HCT116 (cell line): ENCODE measurements at regions of chr18 and their contacts with region 1.

Region 1: DNA sequence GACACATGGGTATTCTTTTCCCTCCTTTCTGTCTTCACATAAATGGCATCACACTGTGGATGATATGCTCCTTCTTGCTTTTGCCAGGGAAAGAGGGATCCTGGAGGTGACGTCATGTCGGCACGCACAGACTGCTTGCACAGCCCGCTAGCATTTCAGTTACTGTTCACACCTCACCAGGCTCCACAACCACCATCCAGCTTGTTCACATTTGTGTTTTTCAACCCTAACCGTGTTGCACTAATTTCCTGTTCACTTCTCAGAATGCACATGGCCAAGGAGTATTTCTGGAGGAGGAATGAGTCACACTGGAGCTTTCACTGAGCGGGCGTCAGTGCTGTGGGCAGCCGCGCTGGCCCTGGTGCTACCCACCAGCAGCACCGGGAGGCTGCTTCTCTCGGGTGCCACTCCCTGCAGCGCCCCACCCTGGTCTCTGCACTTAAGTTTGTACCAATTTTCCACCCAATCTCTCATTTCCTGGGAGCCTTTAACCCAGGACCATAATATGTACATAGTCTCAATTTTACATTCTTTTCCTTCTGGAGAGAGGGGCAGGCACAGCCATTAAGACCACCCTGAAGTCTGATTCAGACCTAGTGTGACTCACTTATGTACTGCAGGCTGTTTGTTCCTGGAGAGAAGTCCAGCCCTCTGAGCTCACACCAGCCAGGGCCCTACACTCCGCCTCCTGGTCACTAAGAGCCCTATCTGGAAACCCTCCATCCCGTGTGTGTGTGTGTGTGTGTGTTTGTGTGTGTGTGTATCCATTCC is 65.1 kb downstream of the MBP start:
- DNase-seq: peak; percentile 75
- ATAC-seq: peak; percentile 84
- H3K4me3 ChIP-seq: peak overlapping the region in 1 of 2 experiments; percentile 37; a peak in 3 of 4 replicates
- H3K27ac ChIP-seq: peak overlapping the region; percentile 67
- H3K4me1 ChIP-seq: peaks cover 52 to 81% of the 10 kb centered on the region in 2 experiments
- H3K27me3 ChIP-seq: no peaks in the 10 kb centered on the region
- CTCF ChIP-seq: peak in 2 of 3 experiments; percentile 15 to 34; a peak in 2 of 6 replicates
- POLR2A ChIP-seq: no peak
- RAD21 ChIP-seq: no peak

Region 2: DNA sequence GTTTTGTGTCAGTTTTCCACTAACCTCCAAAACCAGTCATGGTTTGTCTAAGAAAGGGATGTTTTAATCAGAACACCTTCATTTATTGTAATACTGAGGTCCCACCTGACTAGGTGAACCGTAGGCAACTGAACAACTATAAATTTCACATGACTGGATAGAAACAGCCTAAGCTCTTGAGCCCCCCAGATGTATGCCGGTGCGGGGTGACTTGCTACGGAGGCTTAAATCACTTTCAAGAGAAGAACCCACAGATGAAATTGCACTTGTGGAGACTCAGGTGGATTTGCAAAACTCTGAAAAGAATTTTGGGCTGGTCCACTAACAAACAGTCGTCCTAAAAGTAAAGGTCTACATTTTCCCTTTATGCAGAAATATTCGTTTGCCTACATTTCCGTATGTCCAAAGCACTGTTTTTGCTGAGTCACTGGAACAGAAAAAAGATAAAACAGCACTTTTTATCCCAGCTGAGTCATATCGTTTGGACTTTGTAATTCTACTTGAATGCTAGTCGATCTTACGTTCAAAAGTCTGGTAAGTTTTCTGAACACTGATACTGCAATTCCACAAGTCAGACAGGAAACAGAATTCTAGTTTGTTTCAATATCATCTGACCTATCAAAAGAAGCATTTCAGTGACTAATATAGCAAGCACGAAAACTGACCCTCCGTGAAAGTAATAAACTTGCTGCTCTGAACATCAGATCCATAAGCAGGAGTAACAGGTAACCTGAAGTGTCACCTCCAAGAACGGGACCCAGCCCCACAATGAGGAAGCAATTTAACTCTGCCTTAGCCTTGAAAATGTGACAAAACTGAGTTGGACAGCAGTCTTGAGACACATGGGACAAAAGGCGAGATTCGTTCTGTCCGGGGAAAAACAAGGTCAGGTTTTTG is 590.6 kb before region 1 on chr18:
- CTCF ChIA-PET with region 1: no interaction called
- POLR2A ChIA-PET with region 1: no interaction called
- RAD21 ChIA-PET with region 1: no interaction called
- intact Hi-C with region 1: no loop called
- DNase-seq: no peak
- ATAC-seq: peak; percentile 80
- H3K4me3 ChIP-seq: peak overlapping the region; percentile 37 to 57
- H3K27ac ChIP-seq: peak overlapping the region; percentile 72; the same call in 1 of the 2 replicates
- H3K4me1 ChIP-seq: peaks cover 12 to 24% of the 10 kb centered on the region in 2 experiments; a peak in 3 of 4 replicates
- H3K27me3 ChIP-seq: no peaks in the 10 kb centered on the region
- CTCF ChIP-seq: no peak
- POLR2A ChIP-seq: no peak
- RAD21 ChIP-seq: 0 out of 2 replicates have a peak, but pooled peaks have one; percentile 5

Region 3: DNA sequence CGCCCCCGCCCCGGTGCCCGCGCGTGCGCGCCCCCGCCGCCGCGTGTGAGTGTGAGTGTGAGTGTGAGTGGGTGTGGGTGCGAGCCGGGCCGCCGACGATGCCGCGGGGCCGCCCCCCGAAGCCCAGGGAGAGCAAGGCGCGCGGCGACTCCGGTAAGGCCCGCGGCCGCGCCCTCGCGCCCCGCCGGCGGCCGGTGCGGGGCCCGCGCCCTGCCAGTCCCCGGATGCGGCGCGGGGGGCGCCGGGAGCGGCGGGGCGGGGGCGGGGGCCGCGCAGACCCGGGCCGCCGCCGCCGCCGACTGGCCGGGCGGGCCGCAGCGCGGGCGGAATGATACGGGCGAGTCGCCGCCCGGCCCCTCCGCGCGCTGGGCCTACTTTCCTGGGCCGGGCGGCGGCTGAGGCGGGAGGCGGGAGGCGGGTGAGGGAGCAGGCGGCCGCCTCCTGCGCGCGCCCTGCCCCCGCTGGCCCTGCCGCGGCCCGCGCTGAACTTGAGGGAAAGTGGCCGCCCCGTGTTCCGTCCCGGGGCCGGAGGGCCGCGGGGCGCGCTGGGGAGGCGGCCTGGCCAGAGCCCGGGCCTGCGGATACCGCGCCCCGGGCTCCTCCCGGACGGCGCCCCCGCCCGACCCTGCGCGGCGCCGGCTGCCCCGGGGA is 244.8 kb before region 1 on chr18 and contains the start of gene ZNF236:
- CTCF ChIA-PET with region 1: no interaction called
- POLR2A ChIA-PET with region 1: no interaction called
- RAD21 ChIA-PET with region 1: no interaction called
- intact Hi-C with region 1: loop called (anchors 5 kb)
- DNase-seq: no peak
- ATAC-seq: peak; percentile 51
- H3K4me3 ChIP-seq: peak within 1 kb of the TSS; percentile 83 to 92
- H3K27ac ChIP-seq: peak within 1 kb of the TSS; percentile 97
- H3K4me1 ChIP-seq: peaks cover 11 to 40% of the 10 kb centered on the region in 2 experiments
- H3K27me3 ChIP-seq: no peaks in the 10 kb centered on the region
- CTCF ChIP-seq: no peak
- POLR2A ChIP-seq: peak; percentile 45
- RAD21 ChIP-seq: no peak
- total RNA-seq, gene ZNF236: 15.0 TPM

Region 4: GRCh38 chr18:76850112-76850511 is 217.4 kb before region 1 on chr18:
- CTCF ChIA-PET with region 1: no interaction called
- POLR2A ChIA-PET with region 1: no interaction called
- RAD21 ChIA-PET with region 1: no interaction called
- intact Hi-C with region 1: no loop called
- DNase-seq: no peak
- ATAC-seq: no peak
- H3K4me3 ChIP-seq: no peak overlapping the region
- H3K27ac ChIP-seq: no peak overlapping the region
- H3K4me1 ChIP-seq: no peaks in the 10 kb centered on the region
- H3K27me3 ChIP-seq: no peaks in the 10 kb centered on the region
- CTCF ChIP-seq: no peak
- POLR2A ChIP-seq: no peak
- RAD21 ChIP-seq: no peak

Region 5: GRCh38 chr18:76943542-76944339 is 123.7 kb before region 1 on chr18:
- CTCF ChIA-PET with region 1: no interaction called
- POLR2A ChIA-PET with region 1: no interaction called
- RAD21 ChIA-PET with region 1: no interaction called
- intact Hi-C with region 1: no loop called
- DNase-seq: no peak
- ATAC-seq: no peak
- H3K4me3 ChIP-seq: no peak overlapping the region
- H3K27ac ChIP-seq: no peak overlapping the region
- H3K4me1 ChIP-seq: no peaks in the 10 kb centered on the region
- H3K27me3 ChIP-seq: no peaks in the 10 kb centered on the region
- CTCF ChIP-seq: no peak
- POLR2A ChIP-seq: no peak
- RAD21 ChIP-seq: no peak

Region 6: GRCh38 chr18:77101410-77102258 is 34.2 kb after region 1 on chr18:
- CTCF ChIA-PET with region 1: no interaction called
- POLR2A ChIA-PET with region 1: interaction called, 3 read pairs
- RAD21 ChIA-PET with region 1: no interaction called
- intact Hi-C with region 1: loop called (anchors 1 kb)
- DNase-seq: peak; percentile 89
- ATAC-seq: peak; percentile 87
- H3K4me3 ChIP-seq: peak overlapping the region; percentile 23 to 56
- H3K27ac ChIP-seq: peak overlapping the region; percentile 96
- H3K4me1 ChIP-seq: peaks cover 40 to 73% of the 10 kb centered on the region in 2 experiments
- H3K27me3 ChIP-seq: no peaks in the 10 kb centered on the region
- CTCF ChIP-seq: no peak
- POLR2A ChIP-seq: no peak
- RAD21 ChIP-seq: no peak

Region 7: DNA sequence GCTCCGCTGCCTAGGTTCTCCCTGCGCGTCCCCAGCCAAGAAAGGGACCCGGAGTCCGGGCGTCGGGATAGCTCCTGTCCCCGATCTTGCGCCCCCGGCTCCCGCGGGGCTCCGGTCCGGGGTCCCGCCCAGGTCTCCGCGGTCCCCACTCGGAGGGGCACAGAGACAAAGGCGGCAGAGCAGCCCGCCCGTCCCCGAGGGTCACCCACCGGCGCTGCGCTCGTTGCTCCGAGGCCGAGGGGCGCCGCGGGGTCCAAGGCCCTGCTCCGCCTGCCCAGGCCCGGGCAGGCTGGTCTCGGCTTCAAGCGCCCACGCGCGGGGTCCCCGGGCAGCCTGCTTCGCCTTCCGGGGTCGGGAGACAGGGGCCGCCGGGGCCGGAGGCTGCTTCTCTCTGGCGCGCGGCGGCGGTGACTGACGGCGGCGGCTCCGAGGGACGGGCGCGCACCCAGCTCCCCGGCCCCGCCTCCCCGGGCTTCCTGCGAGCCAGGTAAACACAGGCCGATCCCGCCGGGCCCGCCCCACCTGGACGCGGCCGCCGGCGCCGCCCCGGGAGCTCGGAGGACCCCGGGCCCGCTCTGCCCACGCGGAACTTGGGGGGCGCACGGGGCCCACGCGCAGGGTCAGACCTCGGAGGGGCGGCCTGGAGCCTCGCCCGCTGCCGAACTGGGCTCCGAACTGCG is 65.0 kb after region 1 on chr18 and contains the start of gene MBP:
- CTCF ChIA-PET with region 1: no interaction called
- POLR2A ChIA-PET with region 1: no interaction called
- RAD21 ChIA-PET with region 1: no interaction called
- intact Hi-C with region 1: loop called (anchors 2 kb)
- DNase-seq: no peak
- ATAC-seq: peak; percentile 83
- H3K4me3 ChIP-seq: peak within 1 kb of the TSS; percentile 71 to 79
- H3K27ac ChIP-seq: peak within 1 kb of the TSS; percentile 90
- H3K4me1 ChIP-seq: peaks cover 27 to 51% of the 10 kb centered on the region in 2 experiments
- H3K27me3 ChIP-seq: no peaks in the 10 kb centered on the region
- CTCF ChIP-seq: no peak
- POLR2A ChIP-seq: peak; percentile 66
- RAD21 ChIP-seq: no peak
- total RNA-seq, gene MBP: 34.9 TPM

Region 8: GRCh38 chr18:77207540-77207939 is 140.1 kb after region 1 on chr18:
- CTCF ChIA-PET with region 1: interaction called, 3 read pairs
- POLR2A ChIA-PET with region 1: no interaction called
- RAD21 ChIA-PET with region 1: interaction called in 1 of 2 experiments, 3 read pairs
- intact Hi-C with region 1: loop called (anchors 5 kb)
- DNase-seq: peak; percentile 51
- ATAC-seq: peak; percentile 94
- H3K4me3 ChIP-seq: no peak overlapping the region
- H3K27ac ChIP-seq: no peak overlapping the region
- H3K4me1 ChIP-seq: peaks cover 8 to 14% of the 10 kb centered on the region in 2 experiments
- H3K27me3 ChIP-seq: no peaks in the 10 kb centered on the region
- CTCF ChIP-seq: peak; percentile 61 to 88 (median 82); a peak in 5 of 6 replicates
- POLR2A ChIP-seq: no peak
- RAD21 ChIP-seq: 0 out of 2 replicates have a peak, but pooled peaks have one; percentile 17